ENCODE measurements at regions of chr5 and their contacts with region 1.

Region 1: DNA sequence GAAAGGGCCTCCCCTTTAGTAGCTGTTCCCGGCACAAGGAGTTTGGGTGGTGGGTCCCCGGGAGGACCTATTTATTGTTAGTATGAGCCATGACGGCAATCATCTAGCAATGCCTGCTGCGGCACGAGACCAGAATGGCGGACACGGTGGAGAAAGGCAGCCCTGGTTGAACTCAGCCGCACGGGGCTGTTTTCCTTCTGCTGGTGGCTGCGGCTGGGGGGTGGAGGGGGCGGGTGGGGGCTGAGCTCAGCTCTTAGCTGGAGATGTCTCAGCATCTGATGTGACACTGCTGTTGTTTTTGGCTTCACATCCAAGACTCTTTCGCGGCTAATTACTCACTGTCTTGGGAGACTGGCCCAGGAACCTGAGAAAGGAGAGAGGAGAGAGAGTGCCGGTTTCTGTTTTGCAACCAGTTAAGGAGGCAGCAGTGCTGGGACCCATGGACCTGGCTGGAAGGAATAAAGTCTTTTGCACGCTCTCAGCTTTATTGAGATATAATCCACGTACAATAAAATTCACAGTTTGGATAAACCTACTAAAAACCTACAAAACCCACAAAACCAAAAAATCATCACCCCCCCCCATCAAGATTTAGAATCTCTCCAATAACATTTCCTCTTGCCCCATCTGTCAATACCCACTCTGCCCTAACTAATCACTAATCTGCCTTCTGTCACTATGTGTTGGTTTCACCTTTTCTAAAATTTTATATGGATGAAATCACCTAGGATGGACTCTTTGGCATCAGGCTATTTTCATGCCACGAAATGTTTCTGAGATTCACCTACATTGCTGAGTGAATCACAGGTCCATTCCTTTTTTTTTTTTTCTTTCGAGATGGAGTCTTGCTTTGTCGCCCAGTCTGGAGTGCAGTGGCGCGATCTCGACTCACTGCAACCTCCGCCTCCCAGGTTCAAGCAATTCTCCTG is 81.8 kb upstream of the NEURL1B start:
- DNase-seq: peak; percentile 100
- H3K4me3 Mint-ChIP-seq: peak overlapping the region; percentile 33
- H3K27ac Mint-ChIP-seq: peak overlapping the region; percentile 80
- H3K4me1 Mint-ChIP-seq: peaks cover 37% of the 10 kb centered on the region
- H3K27me3 Mint-ChIP-seq: peaks cover 15% of the 10 kb centered on the region
- CTCF ChIP-seq: no peak

Region 2: GRCh38 chr5:172533399-172534228 is 25.7 kb before region 1 on chr5:
- CTCF ChIA-PET with region 1: interaction called, 8 read pairs
- POLR2A ChIA-PET with region 1: interaction called, 76 read pairs
- intact Hi-C with region 1: no loop called
- DNase-seq: peak; percentile 86
- H3K4me3 Mint-ChIP-seq: peak overlapping the region; percentile 60
- H3K27ac Mint-ChIP-seq: peak overlapping the region; percentile 93
- H3K4me1 Mint-ChIP-seq: peaks cover 27% of the 10 kb centered on the region
- H3K27me3 Mint-ChIP-seq: no peaks in the 10 kb centered on the region
- CTCF ChIP-seq: no peak

Region 3: GRCh38 chr5:172541099-172541771 is 18.0 kb before region 1 on chr5:
- CTCF ChIA-PET with region 1: interaction called, 7 read pairs
- POLR2A ChIA-PET with region 1: interaction called, 76 read pairs
- intact Hi-C with region 1: loop called (anchors 2 kb)
- DNase-seq: no peak
- H3K4me3 Mint-ChIP-seq: no peak overlapping the region
- H3K27ac Mint-ChIP-seq: no peak overlapping the region
- H3K4me1 Mint-ChIP-seq: no peaks in the 10 kb centered on the region
- H3K27me3 Mint-ChIP-seq: peaks cover 21% of the 10 kb centered on the region
- CTCF ChIP-seq: no peak

Region 4: GRCh38 chr5:172607213-172607793 is 48.0 kb after region 1 on chr5:
- CTCF ChIA-PET with region 1: interaction called, 3 read pairs
- POLR2A ChIA-PET with region 1: interaction called, 10 read pairs
- intact Hi-C with region 1: no loop called
- DNase-seq: peak; percentile 98
- H3K4me3 Mint-ChIP-seq: peak overlapping the region; percentile 1
- H3K27ac Mint-ChIP-seq: peak overlapping the region; percentile 40
- H3K4me1 Mint-ChIP-seq: peaks cover 10% of the 10 kb centered on the region
- H3K27me3 Mint-ChIP-seq: no peaks in the 10 kb centered on the region
- CTCF ChIP-seq: no peak

Measured in MCF 10A (cell line).